Adrenal gland (tissue), 19 donors: ENCODE measurements at regions of chr9 and their contacts with region 1.

Region 1: GRCh38 chr9:83937911-83938323 is 16.7 kb upstream of the KIF27 start:
- DNase-seq: peak in 1 of 7 donors; percentile 19
- H3K4me3 ChIP-seq: no peak overlapping the region
- H3K27ac ChIP-seq: no peak overlapping the region
- H3K4me1 ChIP-seq: peaks cover 0 to 16% of the 10 kb centered on the region in 2 donors
- H3K27me3 ChIP-seq: no peaks in the 10 kb centered on the region
- CTCF ChIP-seq: peak; percentile 36 to 81 (median 68)
- POLR2A ChIP-seq: no peak

Region 2: DNA sequence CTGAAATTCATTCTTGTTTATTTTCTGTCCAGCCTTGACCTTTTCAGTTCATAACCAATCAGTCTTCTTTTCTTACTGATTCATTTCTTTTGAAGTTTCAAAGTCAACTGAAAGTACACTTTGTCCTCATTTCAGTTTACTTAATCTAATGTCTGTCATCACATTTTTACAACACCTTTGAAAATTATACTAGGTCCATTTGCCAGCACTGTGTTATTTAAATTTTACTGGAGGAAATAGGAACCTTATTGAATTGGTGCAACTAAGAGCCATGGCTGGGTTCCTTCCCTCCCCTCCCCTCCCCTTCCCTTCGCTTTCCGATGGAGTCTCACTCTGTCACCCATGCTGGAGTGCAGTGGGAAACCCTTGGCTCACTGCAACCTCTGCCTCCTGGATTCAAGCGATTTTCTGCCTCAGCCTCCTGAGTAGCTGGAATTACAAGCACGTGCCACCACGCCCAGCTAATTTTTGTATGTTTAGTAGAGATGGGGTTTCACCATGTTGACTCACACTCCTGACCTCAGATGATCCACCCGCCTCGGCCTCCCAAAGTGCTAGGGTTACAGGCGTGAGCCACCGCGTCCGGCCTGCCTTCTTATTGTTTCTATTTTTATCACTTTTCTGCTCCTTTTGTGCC is 49.0 kb after region 1 on chr9:
- intact Hi-C with region 1: no loop called
- DNase-seq: peak; percentile 41 to 84 (median 69)
- H3K4me3 ChIP-seq: no peak overlapping the region
- H3K27ac ChIP-seq: peak overlapping the region; percentile 45 to 76 (median 57)
- H3K4me1 ChIP-seq: peaks cover 15 to 51% of the 10 kb centered on the region in 2 donors
- H3K27me3 ChIP-seq: no peaks in the 10 kb centered on the region
- CTCF ChIP-seq: no peak
- POLR2A ChIP-seq: peak in 1 of 2 donors; percentile 25

Region 3: DNA sequence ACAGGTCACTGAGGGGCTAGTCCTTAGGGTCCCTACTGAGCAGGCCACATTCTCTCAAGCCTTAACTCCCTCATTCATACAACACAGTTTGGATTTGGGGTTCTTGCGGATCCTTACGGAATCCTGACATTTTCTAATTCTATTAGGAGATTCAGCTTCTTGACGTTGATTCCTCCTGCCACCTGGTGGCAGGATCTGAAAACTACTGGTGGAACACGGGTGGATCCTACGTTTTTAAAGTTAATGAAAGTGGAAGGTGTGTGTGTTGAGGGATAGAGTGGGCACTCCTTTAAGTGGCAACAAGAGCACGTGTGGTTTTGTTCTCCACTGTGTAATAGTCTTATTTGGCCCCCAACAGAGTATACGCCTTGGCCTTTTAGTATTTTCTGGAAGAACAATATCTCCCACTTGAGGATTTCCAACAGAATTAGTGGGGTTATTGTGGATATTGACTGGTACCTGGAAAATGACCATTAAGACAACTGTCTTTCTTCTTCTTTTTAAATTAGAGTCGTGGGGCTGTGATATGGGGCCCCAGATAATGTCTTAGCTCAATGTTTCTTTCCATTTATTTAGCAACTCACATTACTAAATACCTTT is 377.5 kb after region 1 on chr9:
- intact Hi-C with region 1: loop called (anchors 5 to 10 kb)
- DNase-seq: peak; percentile 45 to 89 (median 70)
- H3K4me3 ChIP-seq: no peak overlapping the region
- H3K27ac ChIP-seq: no peak overlapping the region
- H3K4me1 ChIP-seq: peaks cover 4 to 15% of the 10 kb centered on the region in 2 donors
- H3K27me3 ChIP-seq: no peaks in the 10 kb centered on the region
- CTCF ChIP-seq: peak; percentile 67 to 85 (median 80)
- POLR2A ChIP-seq: no peak